ENCODE measurements at regions of chr5 and their contacts with region 1.

Region 1: GRCh38 chr5:103942587-103943186 is 380.1 kb upstream of the NUDT12 start:
- DNase-seq: peak; percentile 51
- ATAC-seq: peak; percentile 73
- H3K4me3 ChIP-seq: no peak overlapping the region
- H3K27ac ChIP-seq: no peak overlapping the region
- H3K4me1 ChIP-seq: 0 out of 2 replicates have a peak, but pooled peaks cover 4% of the 10 kb centered on the region
- H3K27me3 ChIP-seq: no peaks in the 10 kb centered on the region
- CTCF ChIP-seq: peak; percentile 74

Region 2: DNA sequence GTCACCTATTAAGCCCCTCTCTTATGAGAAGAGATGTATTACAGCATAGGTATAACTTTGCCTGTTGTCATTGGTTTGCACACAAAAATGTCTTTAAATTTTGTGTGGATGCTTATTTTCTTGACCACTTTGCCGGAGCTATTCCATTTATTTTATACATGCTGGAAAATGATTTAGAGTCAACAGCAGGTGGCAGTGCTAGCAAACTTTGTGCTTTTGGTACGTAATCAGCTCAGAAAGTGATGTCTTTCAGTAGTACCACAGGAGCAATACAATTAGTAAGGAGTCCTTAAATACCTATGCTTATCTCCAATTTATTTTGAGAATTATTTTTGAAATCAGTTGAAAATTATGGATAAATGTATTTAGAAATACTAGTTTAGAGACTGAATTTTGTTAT is 360.3 kb before region 1 on chr5:
- CTCF ChIA-PET with region 1: no interaction called
- POLR2A ChIA-PET with region 1: no interaction called
- intact Hi-C with region 1: loop called (anchors 5 kb)
- DNase-seq: peak; percentile 73
- ATAC-seq: peak; percentile 68
- H3K4me3 ChIP-seq: no peak overlapping the region
- H3K27ac ChIP-seq: no peak overlapping the region
- H3K4me1 ChIP-seq: no peaks in the 10 kb centered on the region
- H3K27me3 ChIP-seq: no peaks in the 10 kb centered on the region
- CTCF ChIP-seq: peak; percentile 89

Region 3: GRCh38 chr5:103657301-103657700 is 285.4 kb before region 1 on chr5:
- CTCF ChIA-PET with region 1: no interaction called
- POLR2A ChIA-PET with region 1: no interaction called
- intact Hi-C with region 1: no loop called
- DNase-seq: no peak
- ATAC-seq: no peak
- H3K4me3 ChIP-seq: no peak overlapping the region
- H3K27ac ChIP-seq: no peak overlapping the region
- H3K4me1 ChIP-seq: no peaks in the 10 kb centered on the region
- H3K27me3 ChIP-seq: no peaks in the 10 kb centered on the region
- CTCF ChIP-seq: no peak

Region 4: GRCh38 chr5:103829585-103829984 is 113.1 kb before region 1 on chr5:
- CTCF ChIA-PET with region 1: no interaction called
- POLR2A ChIA-PET with region 1: no interaction called
- intact Hi-C with region 1: no loop called
- DNase-seq: peak; percentile 74
- ATAC-seq: no peak
- H3K4me3 ChIP-seq: no peak overlapping the region
- H3K27ac ChIP-seq: no peak overlapping the region
- H3K4me1 ChIP-seq: no peaks in the 10 kb centered on the region
- H3K27me3 ChIP-seq: no peaks in the 10 kb centered on the region
- CTCF ChIP-seq: peak; percentile 94

Region 5: DNA sequence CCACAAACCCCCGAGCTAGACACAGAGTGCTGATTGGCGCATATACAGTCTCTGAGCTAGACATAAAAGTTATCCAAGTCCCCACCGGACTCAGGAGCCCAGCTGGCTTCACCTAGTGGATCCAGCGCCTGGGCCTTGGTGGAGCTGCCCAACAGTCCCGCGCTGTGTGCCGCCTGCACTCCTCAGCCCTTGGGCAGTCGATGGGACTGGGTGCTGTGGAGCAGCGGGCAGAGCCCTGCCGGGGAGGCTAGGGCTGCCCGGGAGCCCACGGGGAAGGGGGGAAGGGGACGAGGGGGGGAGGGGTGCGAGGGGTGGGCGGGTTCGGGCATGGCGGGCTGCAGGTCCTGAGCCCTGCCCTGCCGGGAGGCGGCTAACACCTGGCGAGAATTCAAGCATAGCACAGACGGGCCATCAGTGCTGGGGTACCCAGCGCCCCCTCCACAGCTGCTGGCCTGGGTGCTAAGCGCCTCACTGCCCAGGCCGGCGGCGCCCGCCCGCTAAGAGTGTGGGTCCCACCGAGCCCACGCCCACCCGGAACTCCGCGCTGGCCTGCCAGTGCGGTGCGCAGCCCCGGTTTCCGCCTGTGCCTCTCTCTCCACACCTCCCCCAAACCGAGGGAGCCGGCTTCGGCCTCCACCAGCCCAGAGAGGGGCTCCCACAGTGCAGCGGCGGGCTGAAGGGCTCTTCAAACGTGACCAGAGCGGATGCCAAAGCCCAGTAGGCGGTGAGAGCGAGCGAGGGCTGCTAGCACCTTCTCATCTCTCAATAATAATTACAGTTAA is 11.1 kb after region 1 on chr5:
- CTCF ChIA-PET with region 1: no interaction called
- POLR2A ChIA-PET with region 1: no interaction called
- intact Hi-C with region 1: loop called (anchors 1 kb)
- DNase-seq: no peak
- ATAC-seq: no peak
- H3K4me3 ChIP-seq: no peak overlapping the region
- H3K27ac ChIP-seq: no peak overlapping the region
- H3K4me1 ChIP-seq: no peaks in the 10 kb centered on the region
- H3K27me3 ChIP-seq: no peaks in the 10 kb centered on the region
- CTCF ChIP-seq: no peak

Region 6: DNA sequence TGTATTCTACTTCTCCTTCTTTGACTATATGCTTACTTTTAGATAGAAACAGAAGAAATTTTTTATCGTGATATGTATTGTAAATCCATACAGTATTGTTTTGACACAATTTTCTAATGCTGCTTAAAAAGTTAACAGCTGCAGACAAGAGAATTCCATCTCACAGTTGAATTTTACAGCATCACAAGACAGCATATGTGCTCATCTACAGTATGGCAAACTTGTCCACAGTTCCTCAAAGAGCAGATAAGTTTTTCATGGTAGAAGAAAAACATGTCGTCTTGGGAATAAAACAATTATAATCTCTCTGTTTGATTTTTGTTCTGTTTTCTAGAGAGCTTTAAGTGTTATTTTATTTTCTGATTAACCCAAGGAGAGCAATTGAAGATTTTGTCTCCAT is 58.4 kb after region 1 on chr5:
- CTCF ChIA-PET with region 1: no interaction called
- POLR2A ChIA-PET with region 1: no interaction called
- intact Hi-C with region 1: no loop called
- DNase-seq: no peak
- ATAC-seq: no peak
- H3K4me3 ChIP-seq: no peak overlapping the region
- H3K27ac ChIP-seq: no peak overlapping the region
- H3K4me1 ChIP-seq: no peaks in the 10 kb centered on the region
- H3K27me3 ChIP-seq: no peaks in the 10 kb centered on the region
- CTCF ChIP-seq: no peak

Region 7: GRCh38 chr5:104178829-104179456 is 236.3 kb after region 1 on chr5:
- CTCF ChIA-PET with region 1: interaction called, 3 read pairs
- POLR2A ChIA-PET with region 1: no interaction called
- intact Hi-C with region 1: loop called (anchors 5 kb)
- DNase-seq: peak; percentile 91
- ATAC-seq: peak; percentile 87
- H3K4me3 ChIP-seq: no peak overlapping the region
- H3K27ac ChIP-seq: no peak overlapping the region
- H3K4me1 ChIP-seq: peaks cover 1% of the 10 kb centered on the region; the same call in 1 of the 2 replicates
- H3K27me3 ChIP-seq: no peaks in the 10 kb centered on the region
- CTCF ChIP-seq: peak; percentile 86

Region 8: GRCh38 chr5:104297076-104297475 is 354.4 kb after region 1 on chr5:
- CTCF ChIA-PET with region 1: no interaction called
- POLR2A ChIA-PET with region 1: no interaction called
- intact Hi-C with region 1: no loop called
- DNase-seq: peak; percentile 61
- ATAC-seq: peak; percentile 68
- H3K4me3 ChIP-seq: no peak overlapping the region
- H3K27ac ChIP-seq: peak overlapping the region; percentile 11; the same call in 1 of the 2 replicates
- H3K4me1 ChIP-seq: peaks cover 19% of the 10 kb centered on the region
- H3K27me3 ChIP-seq: no peaks in the 10 kb centered on the region
- CTCF ChIP-seq: no peak